Dorsolateral prefrontal cortex (tissue), 120 donors: ENCODE measurements at regions of chr3 and their contacts with region 1.

Region 1: DNA sequence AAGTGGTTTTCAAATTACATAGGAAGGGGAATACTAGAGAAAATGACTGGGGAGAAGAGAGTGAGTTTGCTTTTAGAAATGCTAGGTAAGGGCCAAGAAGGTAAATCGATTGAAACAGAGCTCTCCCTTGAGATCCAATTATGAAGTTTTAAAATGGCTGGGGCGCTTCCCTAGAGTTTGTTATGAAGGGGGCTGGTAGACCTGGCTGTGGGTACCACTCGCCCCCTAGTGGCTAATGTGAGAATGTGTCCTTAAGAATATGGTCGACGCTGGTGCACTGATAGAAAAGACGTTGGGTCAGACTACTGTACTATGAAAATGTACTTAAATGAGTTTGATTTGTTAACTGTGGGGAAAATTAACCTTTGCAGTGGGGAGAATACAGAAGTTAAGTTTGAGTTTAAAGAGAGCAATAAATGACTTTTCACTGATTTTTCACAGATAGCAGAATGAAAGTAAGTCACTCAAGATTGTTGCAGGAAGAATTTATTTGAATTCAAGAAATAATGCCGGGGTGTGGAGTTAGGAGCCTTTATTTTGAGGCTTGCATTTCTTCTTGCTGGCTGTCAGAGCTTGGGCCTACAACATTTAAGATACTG is 9.2 kb downstream of the TMPRSS7 start:
- DNase-seq: peak in 7 of 10 donors; percentile 11 to 48 (median 39)
- H3K4me3 ChIP-seq: peak overlapping the region in 39 of 59 donors; percentile 7 to 53 (median 32)
- H3K27ac ChIP-seq: no peak overlapping the region
- H3K27me3 ChIP-seq: no peaks in the 10 kb centered on the region
- CTCF ChIP-seq: peak; percentile 79 to 98 (median 91)

Region 2: DNA sequence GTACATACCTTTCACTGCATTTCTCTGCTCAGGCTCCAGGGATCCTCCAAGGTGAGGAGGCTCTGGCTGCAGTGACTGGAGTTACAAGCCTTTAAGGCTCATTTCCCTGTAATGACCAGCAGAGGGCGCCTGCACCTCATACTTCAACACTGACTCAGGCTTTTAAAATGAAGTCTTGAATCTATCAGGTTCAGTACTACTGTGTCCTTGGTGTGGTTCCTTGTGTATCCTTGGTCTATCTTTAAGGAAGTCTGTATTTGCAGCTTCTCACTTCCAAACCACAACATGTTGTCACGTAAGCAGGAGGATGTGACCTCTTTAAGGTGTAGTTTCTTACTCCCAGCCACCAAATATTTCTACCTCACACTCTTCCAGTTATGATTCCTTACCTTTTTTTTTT is 326.1 kb before region 1 on chr3:
- intact Hi-C with region 1: loop called in 1 of 2 experiments (anchors 5 kb)
- DNase-seq: peak; percentile 47 to 87 (median 74)
- H3K4me3 ChIP-seq: no peak overlapping the region
- H3K27ac ChIP-seq: no peak overlapping the region
- H3K27me3 ChIP-seq: no peaks in the 10 kb centered on the region
- CTCF ChIP-seq: peak; percentile 82 to 99 (median 95)

Region 3: GRCh38 chr3:111978493-111979433 is 64.9 kb before region 1 on chr3 and contains the start of gene ABHD10:
- intact Hi-C with region 1: loop called in 1 of 2 experiments (anchors 5 kb)
- DNase-seq: peak; percentile 94 to 97 (median 96)
- H3K4me3 ChIP-seq: peak within 1 kb of the TSS; percentile 63 to 99 (median 91)
- H3K27ac ChIP-seq: peak within 1 kb of the TSS; percentile 46 to 97 (median 86)
- H3K27me3 ChIP-seq: no peaks in the 10 kb centered on the region
- CTCF ChIP-seq: peak in 36 of 56 donors; percentile 3 to 53 (median 32)
- total RNA-seq, gene ABHD10: 22.8 to 62.2 (median 48.1) TPM

Region 4: GRCh38 chr3:111998636-111999483 is 44.8 kb before region 1 on chr3 and contains the start of gene TAGLN3:
- intact Hi-C with region 1: loop called in 1 of 2 experiments (anchors 5 kb)
- DNase-seq: peak in 9 of 10 donors; percentile 48 to 77 (median 68)
- H3K4me3 ChIP-seq: peak within 1 kb of the TSS; percentile 45 to 79 (median 66)
- H3K27ac ChIP-seq: peak within 1 kb of the TSS in 58 of 59 donors; percentile 30 to 93 (median 84)
- H3K27me3 ChIP-seq: no peaks in the 10 kb centered on the region
- CTCF ChIP-seq: no peak
- total RNA-seq, gene TAGLN3: 97.9 to 571 (median 378) TPM

Region 5: GRCh38 chr3:112136959-112137693 is 93.4 kb after region 1 on chr3:
- intact Hi-C with region 1: no loop called
- DNase-seq: peak in 3 of 10 donors; percentile 32 to 68 (median 52)
- H3K4me3 ChIP-seq: no peak overlapping the region
- H3K27ac ChIP-seq: no peak overlapping the region
- H3K27me3 ChIP-seq: no peaks in the 10 kb centered on the region
- CTCF ChIP-seq: peak; percentile 38 to 82 (median 66)